Motor neuron (in vitro differentiated cells): ENCODE measurements at regions of chr4 and their contacts with region 1.

Region 1: DNA sequence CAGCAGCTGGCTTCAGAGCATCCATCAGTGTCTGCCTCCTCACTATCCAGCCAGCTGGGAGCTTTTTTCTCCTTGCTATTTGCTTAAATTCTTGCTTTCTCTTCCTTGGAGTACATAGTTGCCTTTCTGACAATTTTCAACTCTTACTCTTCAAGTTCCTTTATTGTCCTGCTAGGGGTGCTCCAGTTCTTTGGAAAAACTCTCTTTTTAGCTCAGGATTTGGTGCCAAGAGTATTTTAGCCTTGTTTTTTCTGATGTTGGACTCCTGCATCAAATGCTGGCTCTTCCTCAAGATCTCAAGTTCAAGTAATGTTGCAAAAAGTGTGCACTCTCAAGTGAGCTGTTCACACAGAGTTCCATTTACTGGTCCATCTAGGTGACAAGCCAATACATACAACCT is 126.4 kb downstream of the KDR start:
- ATAC-seq: peak in 3 of 8 experiments; percentile 32 to 49 (median 48)
- H3K4me3 ChIP-seq: no peak overlapping the region
- H3K27ac ChIP-seq: no peak overlapping the region
- H3K4me1 ChIP-seq: no peaks in the 10 kb centered on the region

Region 2: GRCh38 chr4:55312489-55313101 is 313.6 kb after region 1 on chr4:
- in situ Hi-C with region 1: loop called in 3 of 9 experiments (anchors 25 kb)
- ATAC-seq: peak in 3 of 8 experiments; percentile 79 to 87 (median 87)
- H3K4me3 ChIP-seq: no peak overlapping the region
- H3K27ac ChIP-seq: no peak overlapping the region
- H3K4me1 ChIP-seq: no peaks in the 10 kb centered on the region